ENCODE measurements at regions of chr17 and their contacts with region 1.

Region 1: DNA sequence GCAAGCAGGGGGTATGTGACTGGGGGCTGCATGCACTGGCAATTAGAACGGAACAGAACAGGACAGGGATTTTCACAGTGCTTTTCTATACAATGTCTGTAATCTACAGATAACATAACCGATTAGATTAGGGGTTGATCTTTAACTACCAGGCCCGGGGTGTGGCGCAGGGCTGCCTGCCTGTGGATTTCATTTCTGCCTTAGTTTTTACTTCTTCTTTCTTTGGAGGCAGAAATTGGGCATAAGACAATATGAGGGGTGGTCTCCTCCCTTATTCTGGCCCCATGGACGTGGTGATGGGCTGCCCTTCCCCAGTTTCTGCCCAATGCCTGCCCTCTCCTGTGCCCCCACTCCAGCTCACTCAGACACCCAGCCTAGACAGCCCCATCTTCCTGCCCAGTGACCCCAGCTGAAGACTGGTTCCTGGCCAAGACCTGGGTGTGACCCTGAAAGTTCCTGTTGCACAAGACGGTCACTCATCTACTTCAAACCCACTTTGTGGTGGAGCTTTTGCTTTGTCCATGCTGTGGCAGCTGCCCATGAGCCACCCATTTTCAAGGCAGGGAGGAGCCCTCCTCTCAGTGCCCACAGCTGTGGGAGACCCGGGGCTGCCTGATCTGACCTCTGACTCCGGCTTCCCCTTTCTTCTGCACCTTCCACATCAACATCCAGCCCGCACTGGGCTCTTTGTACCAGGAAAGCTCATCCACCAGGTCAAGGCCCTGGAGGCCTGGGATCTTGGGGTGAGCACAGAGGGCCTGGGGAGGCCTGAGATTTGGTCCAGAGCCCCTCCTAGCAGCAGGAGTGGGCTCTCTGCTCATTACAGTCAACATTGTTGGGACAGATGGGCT is 18.6 kb downstream of the ALOX12B start:
- DNase-seq: peak; percentile 90 to 93 (median 93)
- H3K4me3 ChIP-seq: peak overlapping the region in 1 of 3 experiments; percentile 51
- H3K4me3 Mint-ChIP-seq: peak overlapping the region; percentile 58 to 72
- H3K27ac ChIP-seq: peak overlapping the region; percentile 69 to 71
- H3K27ac Mint-ChIP-seq: peak overlapping the region; percentile 95 to 99 (median 96)
- H3K4me1 ChIP-seq: peaks cover 78 to 79% of the 10 kb centered on the region in 2 donors
- H3K4me1 Mint-ChIP-seq: peaks cover 83% of the 10 kb centered on the region
- H3K27me3 ChIP-seq: peaks cover 3 to 31% of the 10 kb centered on the region in 2 donors
- H3K27me3 Mint-ChIP-seq: peaks cover 27 to 39% (median 36%) of the 10 kb centered on the region in 3 donors
- CTCF ChIP-seq: no peak

Region 2: GRCh38 chr17:8103549-8103948 is 34.6 kb after region 1 on chr17:
- intact Hi-C with region 1: loop called in 1 of 2 experiments (anchors 5 kb)
- DNase-seq: no peak
- H3K4me3 ChIP-seq: no peak overlapping the region
- H3K4me3 Mint-ChIP-seq: no peak overlapping the region
- H3K27ac ChIP-seq: no peak overlapping the region
- H3K27ac Mint-ChIP-seq: peak overlapping the region in 2 of 7 donors; percentile 1 to 44
- H3K4me1 ChIP-seq: no peaks in the 10 kb centered on the region
- H3K4me1 Mint-ChIP-seq: peaks cover 6% of the 10 kb centered on the region
- H3K27me3 ChIP-seq: no peaks in the 10 kb centered on the region
- H3K27me3 Mint-ChIP-seq: peaks cover 2 to 10% (median 7%) of the 10 kb centered on the region in 3 donors
- CTCF ChIP-seq: no peak